Heart right ventricle (tissue), 16 donors: ENCODE measurements at regions of chr17 and their contacts with region 1.

Region 1: GRCh38 chr17:31900877-31901276 is 631 bp downstream of the UTP6 start:
- DNase-seq: no peak
- ATAC-seq: peak in 2 of 8 donors; percentile 4 to 7
- H3K4me3 ChIP-seq: peak overlapping the region; percentile 32 to 93 (median 76)
- H3K27ac ChIP-seq: peak overlapping the region in 9 of 10 donors; percentile 3 to 86 (median 69)
- H3K4me1 ChIP-seq: peaks cover 0 to 18% (median 13%) of the 10 kb centered on the region in 9 donors
- H3K27me3 ChIP-seq: no peaks in the 10 kb centered on the region
- CTCF ChIP-seq: no peak

Region 2: GRCh38 chr17:31549525-31550388 is 351.1 kb before region 1 on chr17:
- intact Hi-C with region 1: loop called in 1 of 10 experiments (anchors 2 kb)
- DNase-seq: peak; percentile 91 to 93
- ATAC-seq: peak; percentile 93 to 98 (median 96)
- H3K4me3 ChIP-seq: peak overlapping the region; percentile 55 to 93 (median 80)
- H3K27ac ChIP-seq: peak overlapping the region; percentile 83 to 98 (median 94)
- H3K4me1 ChIP-seq: peaks cover 0 to 19% (median 8%) of the 10 kb centered on the region in 9 donors
- H3K27me3 ChIP-seq: no peaks in the 10 kb centered on the region
- CTCF ChIP-seq: peak in 1 of 9 donors; percentile 4

Region 3: GRCh38 chr17:31858642-31859473 is 42.0 kb before region 1 on chr17 and contains the start of gene COPRS:
- intact Hi-C with region 1: loop called in 1 of 10 experiments (anchors 2 kb)
- DNase-seq: peak; percentile 90 to 92
- ATAC-seq: peak; percentile 86 to 97 (median 96)
- H3K4me3 ChIP-seq: peak within 1 kb of the TSS; percentile 5 to 77 (median 67)
- H3K27ac ChIP-seq: peak within 1 kb of the TSS; percentile 19 to 95 (median 80)
- H3K4me1 ChIP-seq: peaks cover 5 to 26% (median 17%) of the 10 kb centered on the region in 9 donors
- H3K27me3 ChIP-seq: no peaks in the 10 kb centered on the region
- CTCF ChIP-seq: peak in 5 of 9 donors; percentile 14 to 54 (median 46)
- total RNA-seq, gene COPRS: 41.3 to 64.9 (median 46.1) TPM

Region 4: GRCh38 chr17:31877911-31878702 is 22.8 kb before region 1 on chr17:
- intact Hi-C with region 1: loop called in 1 of 10 experiments (anchors 1 kb)
- DNase-seq: no peak
- ATAC-seq: no peak
- H3K4me3 ChIP-seq: no peak overlapping the region
- H3K27ac ChIP-seq: no peak overlapping the region
- H3K4me1 ChIP-seq: no peaks in the 10 kb centered on the region
- H3K27me3 ChIP-seq: no peaks in the 10 kb centered on the region
- CTCF ChIP-seq: no peak

Region 5: DNA sequence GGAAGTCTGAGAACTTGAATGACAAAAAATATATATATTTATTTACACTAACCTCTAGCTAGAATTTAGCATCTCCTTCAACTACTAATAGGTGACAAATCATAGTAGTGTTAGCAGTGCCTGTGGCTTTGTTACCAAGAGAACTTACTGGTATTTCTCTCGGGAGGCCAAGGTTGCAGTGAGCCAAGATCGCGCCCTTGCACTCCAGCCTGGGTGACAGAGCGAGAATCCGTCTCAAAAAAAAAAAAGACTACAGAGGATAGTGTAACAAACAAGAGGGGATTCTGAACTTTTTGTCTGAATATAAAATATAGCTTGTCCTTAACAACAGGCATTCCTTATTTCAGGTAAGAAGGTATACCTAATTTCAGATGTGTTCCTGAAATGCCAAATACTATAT is 34.6 kb after region 1 on chr17:
- intact Hi-C with region 1: loop called in 1 of 10 experiments (anchors 5 kb)
- DNase-seq: no peak
- ATAC-seq: no peak
- H3K4me3 ChIP-seq: no peak overlapping the region
- H3K27ac ChIP-seq: no peak overlapping the region
- H3K4me1 ChIP-seq: peaks cover 2 to 22% (median 13%) of the 10 kb centered on the region in 9 donors
- H3K27me3 ChIP-seq: no peaks in the 10 kb centered on the region
- CTCF ChIP-seq: no peak